HEK293 (cell line): ENCODE measurements at regions of chr10 and their contacts with region 1.

Region 1: DNA sequence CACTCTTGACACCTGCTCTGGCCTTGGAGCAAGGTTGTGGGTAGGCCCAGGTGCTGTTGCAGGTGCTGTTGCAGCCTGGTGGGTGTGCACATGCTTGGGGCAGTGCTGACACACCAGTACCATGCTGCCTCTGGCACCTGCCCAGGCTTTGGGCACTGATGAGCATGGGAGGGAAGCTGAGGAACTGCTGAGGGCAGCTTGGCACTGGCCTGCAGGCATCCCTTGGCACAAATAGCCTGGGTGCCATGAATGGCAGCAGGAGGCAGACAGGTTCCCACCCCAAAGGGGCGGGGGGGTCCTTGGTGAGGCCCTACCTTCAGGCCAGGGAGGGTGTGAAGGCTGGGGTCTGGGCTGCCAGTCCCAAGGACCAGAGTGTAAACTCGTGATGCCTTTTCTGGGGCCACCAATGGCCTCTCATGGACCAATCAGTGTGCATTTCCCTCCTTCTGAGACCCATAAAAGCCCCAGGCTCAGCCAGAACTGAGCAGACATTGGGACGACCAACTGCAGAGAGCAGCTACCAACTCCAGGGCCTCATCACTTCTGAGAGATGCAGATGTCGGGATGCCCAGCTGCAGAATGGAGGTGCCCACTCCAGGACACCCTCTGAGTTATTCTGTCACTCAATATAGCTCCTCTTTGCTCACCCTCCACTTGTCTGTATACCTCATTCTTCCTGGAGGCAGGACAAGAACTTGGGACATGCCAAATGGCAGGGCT is 547.4 kb downstream of the ZWINT start:
- H3K4me3 ChIP-seq: no peak overlapping the region
- H3K27ac ChIP-seq: no peak overlapping the region
- H3K4me1 ChIP-seq: no peaks in the 10 kb centered on the region
- CTCF ChIP-seq: no peak

Region 2: GRCh38 chr10:55852900-55853299 is 39.3 kb after region 1 on chr10:
- CTCF ChIA-PET with region 1: no interaction called
- POLR2A ChIA-PET with region 1: no interaction called
- H3K4me3 ChIP-seq: no peak overlapping the region
- H3K27ac ChIP-seq: no peak overlapping the region
- H3K4me1 ChIP-seq: no peaks in the 10 kb centered on the region
- CTCF ChIP-seq: no peak

Region 3: GRCh38 chr10:57113545-57113944 is 1299.9 kb after region 1 on chr10:
- CTCF ChIA-PET with region 1: interaction called, 10 read pairs
- POLR2A ChIA-PET with region 1: no interaction called
- H3K4me3 ChIP-seq: no peak overlapping the region
- H3K27ac ChIP-seq: no peak overlapping the region
- H3K4me1 ChIP-seq: no peaks in the 10 kb centered on the region
- CTCF ChIP-seq: no peak